GM13977 (cell line): ENCODE measurements at regions of chr5 and their contacts with region 1.

Region 1: GRCh38 chr5:172690258-172691075 is 49.4 kb downstream of the NEURL1B start:
- DNase-seq: peak; percentile 80
- CTCF ChIP-seq: no peak

Region 2: DNA sequence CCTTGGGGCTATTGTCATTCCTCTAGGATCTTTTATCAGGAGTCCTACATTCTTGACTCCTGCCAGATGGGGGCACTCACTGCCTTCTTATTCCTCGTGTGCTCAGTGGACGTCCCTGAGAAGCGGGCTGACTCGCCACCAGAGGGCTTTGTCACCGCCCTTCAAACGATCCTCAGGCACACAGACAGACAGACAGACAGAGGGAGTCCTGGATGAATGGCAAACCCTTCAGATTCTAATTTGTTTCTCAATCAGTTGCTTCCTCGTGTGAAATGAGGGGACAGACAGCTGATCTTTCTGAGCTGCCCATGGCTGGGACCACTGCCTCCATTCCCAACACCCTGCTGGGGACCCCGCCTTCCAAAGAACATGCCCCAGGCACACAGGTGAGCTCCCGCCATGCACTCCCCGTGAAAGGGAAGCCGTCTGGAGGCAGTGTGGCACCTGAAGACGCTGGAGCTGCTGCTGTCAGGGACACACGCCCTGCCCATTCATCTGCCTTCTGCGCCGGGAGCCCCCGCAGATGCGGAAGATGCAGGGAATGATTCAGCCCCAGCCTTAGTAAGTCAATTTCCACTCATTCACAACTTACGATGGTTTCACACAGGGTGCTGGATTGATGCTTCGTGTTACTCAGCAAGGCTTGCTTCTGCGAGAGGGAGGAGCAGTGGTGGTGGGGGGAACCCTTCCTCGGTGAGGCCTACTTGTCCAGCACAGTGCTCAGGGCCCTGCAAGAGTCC is 211.3 kb before region 1 on chr5:
- in situ Hi-C with region 1: loop called (anchors 5 kb)
- DNase-seq: peak; percentile 84
- CTCF ChIP-seq: peak; percentile 89